ENCODE measurements at regions of chr11 and their contacts with region 1.

Region 1: GRCh38 chr11:59142530-59143507 is at the start of gene FAM111A:
- DNase-seq: peak; percentile 91
- ATAC-seq: peak; percentile 74
- H3K4me3 ChIP-seq: peak within 1 kb of the TSS; percentile 82 to 94 (median 89)
- H3K4me3 Mint-ChIP-seq: peak within 1 kb of the TSS; percentile 97
- H3K27ac ChIP-seq: peak within 1 kb of the TSS; percentile 88 to 90
- H3K27ac Mint-ChIP-seq: peak within 1 kb of the TSS; percentile 87
- H3K4me1 ChIP-seq: peaks cover 40 to 45% of the 10 kb centered on the region in 2 donors
- H3K4me1 Mint-ChIP-seq: peaks cover 68% of the 10 kb centered on the region
- H3K27me3 ChIP-seq: no peaks in the 10 kb centered on the region
- H3K27me3 Mint-ChIP-seq: no peaks in the 10 kb centered on the region
- CTCF ChIP-seq: no peak
- total RNA-seq, gene FAM111A: 120 and 126 TPM in 2 replicates

Region 2: DNA sequence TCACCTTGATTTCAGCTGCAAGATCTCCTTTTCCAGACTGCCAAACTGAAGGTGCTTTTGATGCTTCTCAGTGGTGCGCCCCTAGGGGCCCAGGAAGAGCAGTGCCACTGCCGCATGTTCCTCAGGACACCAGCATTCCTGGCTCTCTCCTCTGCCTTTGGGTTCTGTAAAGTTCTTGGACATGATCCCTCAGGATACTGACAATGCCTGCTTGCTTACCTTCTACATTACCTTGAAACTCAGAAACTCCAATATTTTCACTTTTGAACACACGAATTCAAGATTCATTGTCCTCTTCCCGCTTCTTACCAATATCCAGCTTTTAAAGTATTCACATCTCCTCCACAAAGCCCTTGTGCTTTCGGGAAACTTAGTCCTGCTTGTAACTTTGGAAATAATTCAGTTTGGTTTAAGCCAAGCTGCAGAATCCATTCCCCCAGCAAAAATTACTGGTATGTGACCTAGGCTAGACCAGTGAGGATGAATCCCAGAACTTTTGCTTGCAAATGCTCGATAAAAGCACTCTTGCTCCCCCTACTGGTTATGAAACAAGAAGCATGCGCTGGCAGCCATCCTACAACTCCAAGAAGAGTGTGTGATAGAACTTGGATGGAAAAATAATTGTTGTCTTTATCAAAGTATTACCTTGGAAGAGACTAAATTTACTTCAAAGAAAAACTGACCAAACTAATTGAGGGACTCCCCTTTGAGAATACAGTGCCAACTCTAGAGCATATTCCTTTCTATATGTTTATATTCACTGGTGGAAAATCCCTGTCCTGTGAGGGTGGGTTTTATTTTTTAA is 618.4 kb before region 1 on chr11:
- CTCF ChIA-PET with region 1: no interaction called
- POLR2A ChIA-PET with region 1: no interaction called
- intact Hi-C with region 1: loop called (anchors 1 kb)
- DNase-seq: peak; percentile 79
- ATAC-seq: peak; percentile 31
- H3K4me3 ChIP-seq: peak overlapping the region; percentile 22 to 70 (median 45)
- H3K4me3 Mint-ChIP-seq: peak overlapping the region; percentile 84
- H3K27ac ChIP-seq: peak overlapping the region; percentile 81 to 99
- H3K27ac Mint-ChIP-seq: peak overlapping the region; percentile 93
- H3K4me1 ChIP-seq: peaks cover 28 to 32% of the 10 kb centered on the region in 2 donors
- H3K4me1 Mint-ChIP-seq: peaks cover 29% of the 10 kb centered on the region
- H3K27me3 ChIP-seq: no peaks in the 10 kb centered on the region
- H3K27me3 Mint-ChIP-seq: no peaks in the 10 kb centered on the region
- CTCF ChIP-seq: peak; percentile 86

Region 3: GRCh38 chr11:58845366-58845765 is 297.5 kb before region 1 on chr11:
- CTCF ChIA-PET with region 1: no interaction called
- POLR2A ChIA-PET with region 1: no interaction called
- intact Hi-C with region 1: loop called (anchors 5 kb)
- DNase-seq: no peak
- ATAC-seq: no peak
- H3K4me3 ChIP-seq: no peak overlapping the region
- H3K4me3 Mint-ChIP-seq: no peak overlapping the region
- H3K27ac ChIP-seq: no peak overlapping the region
- H3K27ac Mint-ChIP-seq: no peak overlapping the region
- H3K4me1 ChIP-seq: peaks cover 10 to 13% of the 10 kb centered on the region in 2 donors
- H3K4me1 Mint-ChIP-seq: peaks cover 5% of the 10 kb centered on the region
- H3K27me3 ChIP-seq: no peaks in the 10 kb centered on the region
- H3K27me3 Mint-ChIP-seq: peaks cover 18% of the 10 kb centered on the region
- CTCF ChIP-seq: no peak

Region 4: GRCh38 chr11:59106363-59107336 is 36.2 kb before region 1 on chr11 and contains the start of gene FAM111B:
- CTCF ChIA-PET with region 1: interaction called, 6 read pairs
- POLR2A ChIA-PET with region 1: interaction called, 15 read pairs
- intact Hi-C with region 1: loop called (anchors 1 kb)
- DNase-seq: peak; percentile 73
- ATAC-seq: peak; percentile 48
- H3K4me3 ChIP-seq: peak within 1 kb of the TSS; percentile 47 to 79 (median 61)
- H3K4me3 Mint-ChIP-seq: peak within 1 kb of the TSS; percentile 94
- H3K27ac ChIP-seq: peak within 1 kb of the TSS; percentile 25 to 59
- H3K27ac Mint-ChIP-seq: peak within 1 kb of the TSS; percentile 93
- H3K4me1 ChIP-seq: peaks cover 64 to 72% of the 10 kb centered on the region in 2 donors
- H3K4me1 Mint-ChIP-seq: peaks cover 83% of the 10 kb centered on the region
- H3K27me3 ChIP-seq: no peaks in the 10 kb centered on the region
- H3K27me3 Mint-ChIP-seq: no peaks in the 10 kb centered on the region
- CTCF ChIP-seq: no peak
- total RNA-seq, gene FAM111B: 148 and 155 TPM in 2 replicates

Measured in B cell (primary cell).